ENCODE measurements at regions of chr16 and their contacts with region 1.

Region 1: GRCh38 chr16:83356266-83356665 is 451.5 kb upstream of the HSBP1 start:
- DNase-seq: peak in 1 of 5 donors; percentile 12
- ATAC-seq: peak in 3 of 4 donors; percentile 59 to 75 (median 61)
- H3K4me3 ChIP-seq: no peak overlapping the region
- H3K27ac ChIP-seq: no peak overlapping the region
- H3K4me1 ChIP-seq: peaks cover 0 to 8% (median 0%) of the 10 kb centered on the region in 12 donors
- H3K27me3 ChIP-seq: no peaks in the 10 kb centered on the region
- CTCF ChIP-seq: peak; percentile 40 to 67 (median 51)
- POLR2A ChIP-seq: no peak

Region 2: DNA sequence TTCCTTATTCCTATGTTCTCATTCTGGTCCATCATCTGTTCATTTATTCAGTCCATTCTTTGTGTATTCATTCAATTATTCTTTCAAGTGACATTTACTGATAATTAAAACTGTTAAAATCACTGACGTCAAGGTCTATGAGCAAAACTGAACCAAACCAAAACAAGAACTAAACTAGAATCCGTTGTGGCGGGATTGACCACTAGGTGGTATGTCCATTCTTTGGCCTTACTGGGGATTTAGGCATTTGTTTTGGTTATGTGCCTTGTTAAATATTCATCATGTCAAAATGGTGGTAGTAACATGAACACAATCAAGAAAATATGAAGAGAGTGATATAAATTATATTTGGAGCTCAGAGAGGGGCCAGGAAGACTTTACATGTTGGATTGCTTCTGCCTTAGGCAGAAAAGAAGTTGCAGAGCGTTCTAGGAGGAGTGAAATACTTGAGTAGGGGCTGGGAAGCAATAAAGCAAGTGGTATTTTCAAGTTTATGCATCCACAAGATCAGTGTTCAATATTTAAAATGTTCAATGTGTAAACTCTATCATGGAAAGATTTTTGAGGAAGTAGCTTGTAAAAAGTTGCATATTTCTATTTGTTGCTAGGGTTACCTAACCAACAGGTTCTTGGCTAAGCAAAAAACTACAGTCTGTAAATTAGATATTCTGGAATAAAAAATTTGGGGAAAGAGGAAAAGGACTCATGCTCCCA is 600.5 kb before region 1 on chr16:
- intact Hi-C with region 1: loop called in 2 of 10 experiments (anchors 10 kb)
- DNase-seq: no peak
- ATAC-seq: no peak
- H3K4me3 ChIP-seq: no peak overlapping the region
- H3K27ac ChIP-seq: peak overlapping the region in 6 of 12 donors; percentile 1 to 51 (median 36)
- H3K4me1 ChIP-seq: peaks cover 0 to 49% (median 24%) of the 10 kb centered on the region in 12 donors
- H3K27me3 ChIP-seq: no peaks in the 10 kb centered on the region
- CTCF ChIP-seq: peak in 2 of 12 donors; percentile 8 to 15
- POLR2A ChIP-seq: no peak

Region 3: DNA sequence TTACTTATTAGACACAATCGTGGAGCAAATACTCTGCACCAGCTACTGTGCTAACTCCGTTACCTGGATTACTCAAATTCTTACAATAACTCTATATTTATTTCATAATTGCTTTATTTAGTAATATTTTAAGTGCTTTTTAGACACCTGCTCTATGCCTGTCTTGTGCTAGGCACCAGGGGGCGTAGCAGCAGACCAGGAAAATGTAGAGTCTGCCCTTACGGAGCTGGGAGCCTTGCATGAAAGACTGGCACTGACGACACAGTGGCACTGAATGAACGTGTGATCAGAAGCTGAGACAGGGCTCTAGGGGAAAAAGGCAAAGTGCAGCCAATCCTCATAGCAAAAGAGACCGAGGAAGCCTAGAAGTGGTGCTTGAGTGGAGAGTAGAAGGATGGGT is 242.9 kb before region 1 on chr16:
- intact Hi-C with region 1: loop called in 1 of 10 experiments (anchors 10 kb)
- DNase-seq: no peak
- ATAC-seq: peak in 2 of 4 donors; percentile 35 to 66
- H3K4me3 ChIP-seq: no peak overlapping the region
- H3K27ac ChIP-seq: no peak overlapping the region
- H3K4me1 ChIP-seq: peaks cover 0 to 12% (median 0%) of the 10 kb centered on the region in 12 donors
- H3K27me3 ChIP-seq: no peaks in the 10 kb centered on the region
- CTCF ChIP-seq: peak in 10 of 12 donors; percentile 9 to 49 (median 36)
- POLR2A ChIP-seq: no peak

Region 4: DNA sequence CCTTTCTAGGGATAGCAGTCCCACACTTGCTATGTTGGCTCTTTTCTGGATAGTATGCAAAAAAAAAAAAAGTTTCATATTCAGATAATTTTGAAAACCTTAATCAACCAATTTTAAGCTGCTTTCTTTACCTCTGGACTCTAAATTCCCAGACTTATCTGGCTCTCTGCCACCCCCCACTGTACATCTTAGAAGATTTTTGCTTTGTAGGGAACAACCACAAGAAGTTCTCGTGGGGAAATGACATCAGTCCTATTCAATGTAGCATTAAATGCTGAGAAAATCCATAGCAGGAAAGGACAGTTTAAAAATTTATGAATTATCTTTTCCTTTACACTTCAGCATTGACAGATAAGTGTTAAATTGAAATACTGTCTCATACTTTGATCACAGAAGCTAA is 111.2 kb before region 1 on chr16:
- intact Hi-C with region 1: loop called in 2 of 10 experiments (anchors 5 to 10 kb)
- DNase-seq: no peak
- ATAC-seq: no peak
- H3K4me3 ChIP-seq: no peak overlapping the region
- H3K27ac ChIP-seq: no peak overlapping the region
- H3K4me1 ChIP-seq: peaks cover 0 to 19% (median 5%) of the 10 kb centered on the region in 12 donors
- H3K27me3 ChIP-seq: no peaks in the 10 kb centered on the region
- CTCF ChIP-seq: no peak
- POLR2A ChIP-seq: no peak

Region 5: GRCh38 chr16:83475108-83475507 is 118.8 kb after region 1 on chr16:
- intact Hi-C with region 1: no loop called
- DNase-seq: no peak
- ATAC-seq: no peak
- H3K4me3 ChIP-seq: no peak overlapping the region
- H3K27ac ChIP-seq: no peak overlapping the region
- H3K4me1 ChIP-seq: peaks cover 0 to 13% (median 3%) of the 10 kb centered on the region in 12 donors
- H3K27me3 ChIP-seq: no peaks in the 10 kb centered on the region
- CTCF ChIP-seq: no peak
- POLR2A ChIP-seq: no peak